ENCODE measurements at regions of chr3 and their contacts with region 1.

Region 1: GRCh38 chr3:167406875-167407492 is 26.9 kb upstream of the ZBBX start:
- DNase-seq: peak in 2 of 5 donors; percentile 14 to 31
- ATAC-seq: peak; percentile 76 to 97 (median 90)
- H3K4me3 ChIP-seq: no peak overlapping the region
- H3K27ac ChIP-seq: no peak overlapping the region
- H3K4me1 ChIP-seq: no peaks in the 10 kb centered on the region
- H3K27me3 ChIP-seq: no peaks in the 10 kb centered on the region
- CTCF ChIP-seq: peak; percentile 16 to 57 (median 40)
- POLR2A ChIP-seq: no peak

Region 2: DNA sequence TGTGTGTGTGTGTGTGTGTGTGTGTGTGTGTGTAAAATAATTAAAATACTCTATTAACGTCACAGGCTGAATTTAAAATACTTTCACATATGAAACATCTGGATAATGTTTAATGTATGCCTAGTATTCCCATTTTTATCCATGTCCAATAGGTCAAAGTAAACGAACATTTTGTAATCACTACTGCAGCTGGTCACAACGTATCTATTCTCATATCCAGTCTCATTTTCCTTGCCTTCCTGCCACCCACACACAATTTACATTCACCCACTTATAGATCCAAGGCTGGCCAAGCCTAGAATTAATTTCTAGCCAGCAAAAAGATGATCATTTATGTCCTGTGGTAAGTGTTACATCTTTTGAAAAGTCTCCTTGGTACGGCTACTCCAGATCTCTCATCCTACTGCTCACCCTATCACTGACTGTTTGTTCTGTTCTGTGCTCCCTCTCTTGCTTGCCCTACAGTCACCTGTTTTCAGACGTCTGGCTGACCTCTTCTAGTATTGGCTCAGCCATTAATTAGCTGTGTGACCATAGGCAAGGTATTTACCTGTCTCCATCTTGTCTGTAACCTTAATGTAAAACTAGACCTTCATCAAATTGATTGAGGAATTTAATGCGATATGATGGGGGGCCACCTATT is 49.3 kb after region 1 on chr3:
- intact Hi-C with region 1: no loop called
- DNase-seq: no peak
- ATAC-seq: no peak
- H3K4me3 ChIP-seq: no peak overlapping the region
- H3K27ac ChIP-seq: no peak overlapping the region
- H3K4me1 ChIP-seq: no peaks in the 10 kb centered on the region
- H3K27me3 ChIP-seq: no peaks in the 10 kb centered on the region
- CTCF ChIP-seq: no peak
- POLR2A ChIP-seq: no peak

Region 3: GRCh38 chr3:167575000-167575600 is 168.1 kb after region 1 on chr3:
- intact Hi-C with region 1: no loop called
- DNase-seq: no peak
- ATAC-seq: no peak
- H3K4me3 ChIP-seq: no peak overlapping the region
- H3K27ac ChIP-seq: no peak overlapping the region
- H3K4me1 ChIP-seq: no peaks in the 10 kb centered on the region
- H3K27me3 ChIP-seq: no peaks in the 10 kb centered on the region
- CTCF ChIP-seq: no peak
- POLR2A ChIP-seq: no peak

Region 4: DNA sequence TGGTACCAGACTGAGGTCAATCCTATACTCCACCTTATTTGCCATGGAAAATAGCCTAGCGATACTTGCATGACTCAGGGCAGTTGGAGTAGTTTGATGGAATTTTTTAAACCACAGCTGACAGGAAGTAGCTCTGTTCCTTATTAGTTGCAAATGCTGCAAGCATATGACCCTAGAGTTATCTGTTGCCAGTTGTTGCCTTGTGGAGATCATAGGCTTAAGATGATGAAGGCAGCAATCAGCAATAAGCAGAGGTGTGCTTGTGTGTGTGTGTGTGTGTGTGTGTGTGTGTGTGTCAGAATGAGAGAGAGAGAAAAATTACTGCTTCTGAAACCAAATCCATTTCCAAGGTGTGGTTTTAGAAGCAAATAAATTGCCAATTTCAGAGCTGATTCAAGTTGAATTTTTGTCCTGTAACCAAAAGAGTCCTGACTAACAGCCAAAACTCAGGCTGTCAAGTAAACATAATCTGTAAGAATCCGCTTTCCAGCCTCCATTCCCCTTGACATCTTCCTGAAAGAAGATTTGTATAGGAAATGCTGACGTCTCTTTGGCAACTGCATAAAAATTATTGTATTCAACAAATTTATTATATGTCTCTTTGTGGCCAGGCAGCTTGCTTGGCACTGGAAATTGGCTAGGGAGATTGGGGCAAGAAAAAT is 469.8 kb after region 1 on chr3:
- intact Hi-C with region 1: loop called in 7 of 10 experiments (anchors 5 to 10 kb)
- DNase-seq: peak in 1 of 5 donors; percentile 17
- ATAC-seq: peak; percentile 53 to 84 (median 82)
- H3K4me3 ChIP-seq: no peak overlapping the region
- H3K27ac ChIP-seq: peak overlapping the region in 11 of 12 donors; percentile 41 to 87 (median 72)
- H3K4me1 ChIP-seq: peaks cover 0 to 58% (median 44%) of the 10 kb centered on the region in 12 donors
- H3K27me3 ChIP-seq: no peaks in the 10 kb centered on the region
- CTCF ChIP-seq: no peak
- POLR2A ChIP-seq: no peak